ENCODE measurements at regions of chr5 and their contacts with region 1.

Region 1: GRCh38 chr5:103041071-103041676 is 78.8 kb downstream of the GIN1 start:
- DNase-seq: no peak
- H3K4me3 ChIP-seq: no peak overlapping the region
- H3K4me3 Mint-ChIP-seq: no peak overlapping the region
- H3K27ac Mint-ChIP-seq: no peak overlapping the region
- H3K4me1 ChIP-seq: no peaks in the 10 kb centered on the region
- H3K4me1 Mint-ChIP-seq: no peaks in the 10 kb centered on the region
- H3K27me3 ChIP-seq: no peaks in the 10 kb centered on the region
- H3K27me3 Mint-ChIP-seq: no peaks in the 10 kb centered on the region
- CTCF ChIP-seq: peak; percentile 28 to 45

Region 2: DNA sequence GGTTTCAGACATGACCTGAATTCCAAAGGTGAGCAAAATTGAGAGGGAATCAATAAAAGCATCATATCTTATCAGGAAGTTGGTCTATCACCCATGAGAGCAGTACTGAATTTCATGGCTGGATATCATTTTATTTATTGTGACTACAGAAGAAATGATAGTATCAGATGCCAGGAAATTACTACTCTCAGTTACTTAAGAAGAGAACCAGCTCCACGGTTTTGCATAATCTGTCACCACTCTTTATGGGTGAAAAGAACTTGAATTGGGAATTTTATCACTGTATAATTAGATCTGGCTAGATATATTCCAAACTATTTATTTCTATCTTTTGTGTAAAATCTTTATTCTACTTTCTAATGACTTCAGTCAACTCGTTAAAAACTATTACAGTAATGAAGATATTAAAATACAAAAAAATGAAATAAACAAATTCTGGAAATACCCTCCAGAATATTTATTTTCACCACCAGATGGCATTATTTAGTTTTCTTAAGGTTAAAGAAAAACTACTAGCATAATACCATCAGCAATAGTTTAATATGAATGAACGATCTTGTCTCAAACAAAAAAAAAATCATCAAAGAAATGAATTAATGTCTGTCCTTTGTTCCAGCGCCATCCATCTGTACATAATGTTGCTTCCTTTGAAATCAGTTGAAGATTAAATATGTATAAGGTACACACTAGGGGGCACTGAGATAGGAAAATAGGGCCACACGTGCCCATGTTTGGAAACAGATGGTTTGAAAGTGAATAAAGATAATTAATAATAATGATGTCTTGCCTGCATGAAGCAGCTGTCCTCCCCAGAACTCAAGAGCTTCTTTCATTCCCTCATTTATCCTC is 457.7 kb before region 1 on chr5:
- CTCF ChIA-PET with region 1: no interaction called
- POLR2A ChIA-PET with region 1: no interaction called
- intact Hi-C with region 1: loop called (anchors 1 kb)
- DNase-seq: no peak
- H3K4me3 ChIP-seq: no peak overlapping the region
- H3K4me3 Mint-ChIP-seq: no peak overlapping the region
- H3K27ac Mint-ChIP-seq: no peak overlapping the region
- H3K4me1 ChIP-seq: no peaks in the 10 kb centered on the region
- H3K4me1 Mint-ChIP-seq: no peaks in the 10 kb centered on the region
- H3K27me3 ChIP-seq: no peaks in the 10 kb centered on the region
- H3K27me3 Mint-ChIP-seq: no peaks in the 10 kb centered on the region
- CTCF ChIP-seq: peak in 1 of 2 experiments; percentile 63

Region 3: DNA sequence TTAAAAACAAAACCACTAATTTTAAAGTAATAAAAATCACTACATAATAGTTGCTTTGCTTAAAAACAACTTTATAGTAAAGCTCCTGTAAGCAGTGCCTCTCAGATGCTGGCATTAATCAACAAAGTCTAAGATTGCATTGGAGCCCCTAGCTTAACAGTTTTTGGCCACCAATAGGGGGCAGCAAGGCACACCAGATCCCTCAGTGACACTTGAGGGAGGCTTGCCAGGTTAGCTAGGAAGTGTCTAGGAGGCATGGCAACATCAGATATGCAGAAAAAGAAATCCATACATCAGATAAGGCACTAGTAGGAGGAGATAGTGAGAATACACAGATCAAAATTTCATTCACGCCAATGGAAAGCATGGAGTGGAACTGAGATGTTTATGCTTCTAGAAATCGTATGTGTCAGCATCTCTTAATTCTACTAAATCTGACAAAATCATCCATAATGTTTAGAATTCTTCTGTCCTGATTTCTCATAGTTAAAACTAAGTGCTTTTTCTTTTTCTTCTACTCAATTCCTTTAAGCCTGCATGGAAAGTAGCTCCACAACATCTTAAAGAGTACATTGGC is 359.7 kb before region 1 on chr5:
- CTCF ChIA-PET with region 1: no interaction called
- POLR2A ChIA-PET with region 1: no interaction called
- intact Hi-C with region 1: loop called (anchors 1 kb)
- DNase-seq: peak; percentile 65 to 70
- H3K4me3 ChIP-seq: no peak overlapping the region
- H3K4me3 Mint-ChIP-seq: no peak overlapping the region
- H3K27ac Mint-ChIP-seq: no peak overlapping the region
- H3K4me1 ChIP-seq: no peaks in the 10 kb centered on the region
- H3K4me1 Mint-ChIP-seq: no peaks in the 10 kb centered on the region
- H3K27me3 ChIP-seq: no peaks in the 10 kb centered on the region
- H3K27me3 Mint-ChIP-seq: no peaks in the 10 kb centered on the region
- CTCF ChIP-seq: peak; percentile 63 to 70

Region 4: GRCh38 chr5:102778478-102778877 is 262.7 kb before region 1 on chr5:
- CTCF ChIA-PET with region 1: no interaction called
- POLR2A ChIA-PET with region 1: no interaction called
- intact Hi-C with region 1: loop called (anchors 2 kb)
- DNase-seq: no peak
- H3K4me3 ChIP-seq: no peak overlapping the region
- H3K4me3 Mint-ChIP-seq: no peak overlapping the region
- H3K27ac Mint-ChIP-seq: no peak overlapping the region
- H3K4me1 ChIP-seq: no peaks in the 10 kb centered on the region
- H3K4me1 Mint-ChIP-seq: no peaks in the 10 kb centered on the region
- H3K27me3 ChIP-seq: no peaks in the 10 kb centered on the region
- H3K27me3 Mint-ChIP-seq: no peaks in the 10 kb centered on the region
- CTCF ChIP-seq: no peak

Region 5: DNA sequence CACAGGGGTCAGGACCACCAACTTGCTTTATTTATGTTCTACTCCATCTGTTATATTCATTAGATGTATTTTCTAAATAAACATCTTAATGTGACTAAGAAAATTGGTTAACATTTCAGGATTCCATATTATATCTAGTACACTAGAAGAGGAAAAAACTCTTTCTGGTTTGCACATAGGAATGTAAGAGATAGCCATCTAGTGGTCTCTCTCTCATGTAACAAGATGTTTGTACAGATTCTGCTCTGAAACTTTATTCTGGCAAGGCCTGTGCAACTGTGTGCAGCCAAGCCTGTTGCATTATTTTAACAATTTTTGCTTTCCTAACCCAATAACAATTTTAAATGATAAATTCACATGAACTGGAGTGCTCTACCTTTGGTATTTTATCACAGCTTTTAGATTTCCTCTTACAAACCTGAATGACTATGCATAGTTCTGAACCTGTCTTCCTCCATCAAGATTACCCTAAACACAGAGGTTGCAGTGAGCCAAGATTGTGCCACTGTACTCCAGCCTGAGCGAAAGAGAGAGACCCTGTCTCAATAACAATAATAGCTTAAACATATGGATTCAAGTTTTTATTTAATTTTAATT is 69.4 kb before region 1 on chr5:
- CTCF ChIA-PET with region 1: no interaction called
- POLR2A ChIA-PET with region 1: no interaction called
- intact Hi-C with region 1: loop called (anchors 1 kb)
- DNase-seq: peak in 1 of 2 experiments; percentile 6
- H3K4me3 ChIP-seq: no peak overlapping the region
- H3K4me3 Mint-ChIP-seq: no peak overlapping the region
- H3K27ac Mint-ChIP-seq: no peak overlapping the region
- H3K4me1 ChIP-seq: no peaks in the 10 kb centered on the region
- H3K4me1 Mint-ChIP-seq: no peaks in the 10 kb centered on the region
- H3K27me3 ChIP-seq: no peaks in the 10 kb centered on the region
- H3K27me3 Mint-ChIP-seq: no peaks in the 10 kb centered on the region
- CTCF ChIP-seq: peak in 1 of 2 experiments; percentile 47

Region 6: DNA sequence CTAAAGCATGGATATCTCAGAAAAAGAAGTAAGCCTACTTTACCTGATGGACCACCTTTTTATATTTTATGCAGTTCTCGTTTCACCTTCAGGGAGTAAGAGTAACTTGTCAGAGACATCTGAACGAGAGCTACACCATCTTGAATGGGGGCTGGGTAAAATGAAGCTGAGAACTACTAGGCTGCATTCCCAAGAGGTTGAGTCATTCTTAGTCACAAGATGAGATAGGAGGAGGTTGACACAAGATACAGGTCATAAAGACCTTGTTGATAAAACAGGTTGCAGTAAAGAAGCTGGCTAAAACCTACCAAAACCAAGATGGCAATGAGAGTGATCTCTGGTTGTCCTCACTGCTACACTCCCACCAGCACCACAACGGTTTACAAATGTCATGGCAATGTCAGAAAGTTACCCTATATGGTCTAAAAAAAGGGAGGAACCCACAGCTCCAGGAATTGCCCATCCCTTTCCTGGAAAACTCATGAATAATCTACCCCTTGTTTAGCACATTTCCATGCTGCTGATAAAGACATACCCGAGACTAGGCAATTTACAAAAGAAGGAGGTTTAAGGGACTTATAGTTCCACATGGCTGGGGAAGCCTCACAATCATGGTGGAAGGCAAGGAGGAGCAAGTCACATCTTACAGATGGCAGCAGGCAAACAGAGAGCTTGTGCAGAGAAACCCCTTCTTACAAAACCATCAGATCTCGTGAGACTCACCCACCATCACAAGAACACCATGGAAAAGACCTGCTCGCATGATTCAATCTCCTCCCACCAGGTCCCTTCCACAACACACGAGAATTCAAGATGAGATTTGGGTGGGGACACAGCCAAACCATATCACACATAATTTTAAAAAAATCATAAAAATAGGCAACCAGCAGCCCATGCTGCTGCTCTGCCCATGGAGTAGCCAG is 16.3 kb after region 1 on chr5:
- CTCF ChIA-PET with region 1: no interaction called
- POLR2A ChIA-PET with region 1: no interaction called
- intact Hi-C with region 1: loop called (anchors 1 kb)
- DNase-seq: peak; percentile 63
- H3K4me3 ChIP-seq: no peak overlapping the region
- H3K4me3 Mint-ChIP-seq: peak overlapping the region; percentile 26
- H3K27ac Mint-ChIP-seq: peak overlapping the region; percentile 83
- H3K4me1 ChIP-seq: peaks cover 50% of the 10 kb centered on the region
- H3K4me1 Mint-ChIP-seq: peaks cover 37% of the 10 kb centered on the region
- H3K27me3 ChIP-seq: no peaks in the 10 kb centered on the region
- H3K27me3 Mint-ChIP-seq: no peaks in the 10 kb centered on the region
- CTCF ChIP-seq: no peak

Region 7: DNA sequence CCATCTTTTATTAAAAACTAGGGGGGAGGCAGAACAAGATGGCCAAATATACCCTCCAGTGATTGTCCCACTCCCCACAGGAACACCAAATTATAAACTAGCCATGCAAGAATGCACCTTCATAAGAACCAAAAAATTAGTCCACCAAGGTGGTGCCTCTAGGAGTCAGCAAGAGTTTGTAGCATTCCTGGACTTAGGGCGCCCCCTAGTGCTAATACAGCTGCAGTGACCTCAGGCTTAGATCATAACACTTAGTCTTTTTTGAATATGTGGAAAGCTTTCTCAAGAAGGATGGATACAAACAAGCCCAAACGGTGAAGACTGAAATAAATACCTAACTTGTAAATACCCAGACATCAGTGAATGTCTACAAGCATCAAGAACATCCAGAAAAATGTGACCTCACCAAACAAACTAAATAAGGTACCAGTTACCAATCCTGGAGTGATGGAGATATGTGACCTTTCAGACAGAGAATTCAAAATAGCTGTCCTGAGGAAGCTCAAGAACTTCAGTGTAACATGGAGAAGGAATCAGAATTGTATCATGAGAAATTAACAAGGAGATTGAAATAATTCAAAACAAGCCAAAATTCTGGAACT is 98.2 kb after region 1 on chr5:
- CTCF ChIA-PET with region 1: no interaction called
- POLR2A ChIA-PET with region 1: no interaction called
- intact Hi-C with region 1: loop called (anchors 1 kb)
- DNase-seq: peak; percentile 78 to 84
- H3K4me3 ChIP-seq: no peak overlapping the region
- H3K4me3 Mint-ChIP-seq: no peak overlapping the region
- H3K27ac Mint-ChIP-seq: no peak overlapping the region
- H3K4me1 ChIP-seq: peaks cover 22% of the 10 kb centered on the region
- H3K4me1 Mint-ChIP-seq: no peaks in the 10 kb centered on the region
- H3K27me3 ChIP-seq: no peaks in the 10 kb centered on the region
- H3K27me3 Mint-ChIP-seq: no peaks in the 10 kb centered on the region
- CTCF ChIP-seq: peak; percentile 92 to 93

Measured in Caco-2 (cell line).